ENCODE measurements at regions of chr13 and their contacts with region 1.

Region 1: GRCh38 chr13:72839831-72840426 is 58.0 kb downstream of the PIBF1 start:
- DNase-seq: peak; percentile 57
- CTCF ChIP-seq: peak; percentile 68

Region 2: DNA sequence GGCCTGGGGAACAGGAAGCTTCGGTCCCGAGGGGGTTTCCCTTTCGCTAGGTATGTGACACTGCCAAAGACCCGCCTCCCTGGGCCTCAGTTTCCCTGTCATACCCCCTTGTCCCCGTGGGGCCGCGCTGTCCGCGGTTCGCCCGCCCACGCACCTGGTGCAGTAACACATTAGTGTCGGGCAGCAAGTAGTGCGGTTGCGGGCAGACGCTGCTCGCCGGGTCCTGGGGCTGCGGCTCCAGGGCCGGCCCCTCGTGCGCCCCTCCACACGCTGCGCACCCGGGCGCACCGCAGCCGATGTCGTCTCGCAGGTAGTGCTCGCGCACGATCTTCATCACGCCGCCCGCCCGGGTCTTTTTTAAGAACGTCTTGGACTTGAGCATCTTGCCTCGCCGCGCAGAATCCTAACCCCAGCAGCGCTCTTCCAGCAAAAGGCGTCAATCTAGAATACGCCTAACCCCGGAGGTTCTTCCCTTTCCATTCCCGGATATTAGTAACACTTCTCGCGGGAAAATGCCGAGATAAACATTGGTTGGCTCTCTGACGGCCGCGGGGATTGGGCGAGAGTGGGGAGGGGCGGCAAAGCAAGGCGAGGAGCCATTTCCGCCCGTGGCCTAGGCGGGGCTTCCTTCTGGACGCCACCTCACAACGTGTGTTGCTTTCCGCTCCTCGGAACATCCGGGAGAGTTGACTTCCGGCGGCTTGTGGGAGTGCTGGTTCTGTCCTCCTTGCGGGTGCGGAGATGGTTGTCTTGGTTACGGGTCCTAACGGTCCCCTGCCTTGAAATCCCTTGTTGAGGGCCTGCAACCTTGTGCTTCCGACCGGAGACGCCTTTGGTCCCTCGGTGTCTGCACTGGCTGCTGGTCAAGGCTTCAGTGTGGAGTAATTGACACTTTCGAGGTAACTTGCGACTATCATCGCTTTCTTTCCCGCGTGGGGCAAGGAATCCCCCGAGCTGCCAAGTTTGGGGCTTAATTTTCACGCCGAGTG is 58.2 kb before region 1 on chr13 and contains the starts of genes DIS3 and PIBF1:
- CTCF ChIA-PET with region 1: no interaction called
- POLR2A ChIA-PET with region 1: no interaction called
- DNase-seq: peak; percentile 97
- CTCF ChIP-seq: no peak

Region 3: DNA sequence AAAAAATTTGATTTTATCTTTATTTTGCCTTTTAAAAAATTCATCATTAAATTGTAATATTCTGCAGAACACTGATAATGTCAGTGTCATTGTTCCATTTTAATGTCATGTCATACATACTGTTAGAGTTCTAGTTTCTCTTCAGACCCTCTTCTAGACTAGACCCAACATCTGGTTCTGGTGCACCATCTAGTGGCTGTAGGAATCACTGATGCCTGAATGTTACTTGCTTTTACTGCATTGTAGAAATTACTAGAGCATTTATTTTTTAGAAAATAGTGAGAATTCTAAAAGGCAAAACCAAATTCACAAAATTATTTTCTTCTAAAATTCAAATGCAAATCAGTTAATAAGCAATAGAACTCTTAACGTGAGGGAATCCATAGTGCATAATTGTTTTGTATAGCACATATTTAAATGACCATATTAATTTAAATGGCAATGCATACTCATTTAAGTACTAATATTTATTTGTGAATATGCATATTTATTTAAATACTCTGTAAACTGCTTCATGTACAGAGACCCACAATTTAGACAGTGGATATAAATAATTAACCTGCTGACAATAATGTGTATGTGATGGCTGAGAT is 868.6 kb after region 1 on chr13:
- CTCF ChIA-PET with region 1: interaction called, 10 read pairs
- POLR2A ChIA-PET with region 1: no interaction called
- DNase-seq: peak; percentile 48
- CTCF ChIP-seq: peak; percentile 81

Measured in GM10248 (cell line).